Gastrocnemius medialis (tissue), 4 donors: ENCODE measurements at regions of chrX and their contacts with region 1.

Region 1: DNA sequence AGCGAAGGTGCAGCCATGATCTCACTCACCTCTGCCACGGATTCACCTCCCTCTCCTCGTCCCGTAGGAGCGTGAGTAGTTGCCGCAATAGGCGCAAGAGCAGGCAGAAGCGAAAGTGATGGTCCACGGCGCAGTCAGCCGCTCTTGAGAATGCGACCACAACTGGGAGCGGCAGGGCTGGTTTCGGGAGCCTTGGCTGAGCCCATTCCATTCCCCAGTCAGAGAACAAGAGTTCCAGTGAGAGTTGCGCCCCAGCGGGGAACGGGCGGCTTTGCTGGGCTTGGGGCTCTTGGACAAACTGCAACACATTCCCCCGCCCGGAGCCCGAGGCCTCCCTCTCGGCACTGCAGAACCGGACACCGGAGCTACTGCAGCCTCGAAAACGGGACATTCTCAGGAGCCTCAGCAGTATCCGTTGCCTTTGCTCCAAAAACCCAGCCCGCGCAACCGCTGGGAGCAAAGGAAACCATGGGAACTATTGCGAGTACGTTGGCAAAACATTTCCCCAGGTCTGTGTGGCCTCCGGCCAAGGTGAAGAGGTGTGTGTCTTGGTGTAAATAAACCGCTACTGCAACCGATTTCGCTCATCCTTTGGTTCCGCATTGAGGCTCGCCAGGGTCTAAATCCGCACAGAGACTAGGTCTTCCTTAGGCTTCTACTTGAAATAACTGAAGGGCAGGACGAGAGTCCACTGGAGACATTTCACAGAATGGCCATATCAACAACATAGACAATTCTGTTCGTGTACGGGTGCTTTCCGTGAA is 5.7 kb upstream of the ZBTB33 start:
- DNase-seq: peak; percentile 60 to 77
- ATAC-seq: peak; percentile 96 to 99
- H3K4me3 ChIP-seq: peak overlapping the region; percentile 72 to 87 (median 78)
- H3K27ac ChIP-seq: peak overlapping the region; percentile 78 to 92 (median 84)
- H3K4me1 ChIP-seq: peaks cover 7 to 10% of the 10 kb centered on the region in 2 donors
- H3K27me3 ChIP-seq: no peaks in the 10 kb centered on the region
- CTCF ChIP-seq: no peak
- POLR2A ChIP-seq: no peak

Region 2: GRCh38 chrX:120439921-120440320 is 195.0 kb after region 1 on chrX:
- in situ Hi-C with region 1: no loop called
- intact Hi-C with region 1: no loop called
- DNase-seq: no peak
- ATAC-seq: no peak
- H3K4me3 ChIP-seq: no peak overlapping the region
- H3K27ac ChIP-seq: peak overlapping the region; percentile 1 to 54 (median 17)
- H3K4me1 ChIP-seq: peaks cover 4 to 13% of the 10 kb centered on the region in 2 donors
- H3K27me3 ChIP-seq: no peaks in the 10 kb centered on the region
- CTCF ChIP-seq: no peak
- POLR2A ChIP-seq: no peak

Region 3: GRCh38 chrX:120468825-120469525 is 224.1 kb after region 1 on chrX and contains the start of gene LAMP2:
- in situ Hi-C with region 1: loop called in 2 of 4 experiments (anchors 25 kb)
- intact Hi-C with region 1: no loop called
- DNase-seq: peak; percentile 89 to 93
- ATAC-seq: peak; percentile 95 to 99
- H3K4me3 ChIP-seq: peak within 1 kb of the TSS; percentile 63 to 82 (median 76)
- H3K27ac ChIP-seq: peak within 1 kb of the TSS; percentile 95 to 97 (median 95)
- H3K4me1 ChIP-seq: peaks cover 9 to 25% of the 10 kb centered on the region in 2 donors
- H3K27me3 ChIP-seq: no peaks in the 10 kb centered on the region
- CTCF ChIP-seq: no peak
- POLR2A ChIP-seq: peak; percentile 86 to 91
- total RNA-seq, gene LAMP2: 70.0 to 112 (median 110) TPM

Region 4: DNA sequence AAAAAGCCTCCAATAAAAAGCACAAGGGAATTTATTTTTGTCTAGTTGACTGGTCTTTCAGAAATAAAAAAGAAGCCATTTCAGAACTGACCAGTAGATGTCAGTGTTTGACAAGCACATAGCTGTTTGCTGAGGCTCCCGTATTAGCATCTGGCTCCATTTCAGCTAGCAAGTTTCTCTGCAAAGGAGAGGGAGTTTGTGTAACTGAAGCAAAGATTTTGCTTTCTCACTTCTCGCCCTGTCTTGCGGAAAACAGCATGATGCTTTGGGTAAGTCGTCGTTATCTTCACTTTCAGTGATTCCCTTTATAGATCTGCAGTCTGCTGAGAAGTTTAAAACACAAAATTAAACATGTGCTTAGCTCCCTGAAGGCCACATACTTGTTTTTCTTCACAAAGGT is 545.2 kb after region 1 on chrX:
- in situ Hi-C with region 1: no loop called
- intact Hi-C with region 1: no loop called
- DNase-seq: peak in 1 of 2 donors; percentile 2
- ATAC-seq: peak in 1 of 2 donors; percentile 41
- H3K4me3 ChIP-seq: no peak overlapping the region
- H3K27ac ChIP-seq: no peak overlapping the region
- H3K4me1 ChIP-seq: peaks cover 3% of the 10 kb centered on the region in 2 donors
- H3K27me3 ChIP-seq: no peaks in the 10 kb centered on the region
- CTCF ChIP-seq: peak in 4 of 5 experiments; percentile 53 to 84 (median 64)
- POLR2A ChIP-seq: no peak